Activated CD4-positive, alpha-beta T cell treated with anti-CD3 and anti-CD28 coated beads for 36 hours (primary cell): ENCODE measurements at regions of chr2 and their contacts with region 1.

Region 1: DNA sequence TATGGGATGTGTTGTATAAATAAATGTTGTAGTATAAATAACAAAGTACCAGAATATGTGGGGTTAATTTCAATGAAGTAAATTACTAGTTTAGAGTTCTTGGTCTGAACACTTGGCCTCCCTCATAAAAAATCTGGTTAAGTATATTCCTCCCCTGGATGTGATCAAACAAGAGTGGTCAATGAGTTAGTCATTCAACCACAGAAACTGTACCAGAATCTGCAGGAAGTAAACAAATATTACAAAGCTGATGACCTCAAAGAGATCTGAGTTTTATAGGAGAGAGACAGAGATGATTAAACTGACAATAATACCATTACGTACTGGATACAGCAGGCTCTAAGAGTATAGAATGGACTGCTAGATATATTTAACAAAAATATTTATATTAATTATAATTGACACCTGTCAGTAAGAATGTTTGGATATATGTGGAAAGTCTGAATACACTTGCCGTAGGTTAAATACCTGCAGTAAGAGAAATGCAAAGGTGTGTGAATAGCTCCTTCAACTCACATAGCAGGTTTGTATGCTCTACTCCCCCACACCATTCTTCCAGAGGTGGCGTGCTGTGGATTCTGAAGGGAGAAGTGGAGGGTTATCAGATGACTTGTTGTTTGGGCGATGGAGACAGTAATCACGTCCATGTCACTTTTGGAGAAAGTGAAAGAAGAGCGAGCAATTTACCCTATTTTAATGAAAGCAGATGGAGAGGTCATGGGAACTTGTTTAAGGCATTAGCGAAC is 108.3 kb upstream of the LRATD1 start:
- DNase-seq: no peak
- ATAC-seq: no peak
- H3K4me3 Mint-ChIP-seq: no peak overlapping the region
- H3K27ac Mint-ChIP-seq: no peak overlapping the region
- H3K4me1 Mint-ChIP-seq: no peaks in the 10 kb centered on the region
- H3K27me3 Mint-ChIP-seq: no peaks in the 10 kb centered on the region

Region 2: DNA sequence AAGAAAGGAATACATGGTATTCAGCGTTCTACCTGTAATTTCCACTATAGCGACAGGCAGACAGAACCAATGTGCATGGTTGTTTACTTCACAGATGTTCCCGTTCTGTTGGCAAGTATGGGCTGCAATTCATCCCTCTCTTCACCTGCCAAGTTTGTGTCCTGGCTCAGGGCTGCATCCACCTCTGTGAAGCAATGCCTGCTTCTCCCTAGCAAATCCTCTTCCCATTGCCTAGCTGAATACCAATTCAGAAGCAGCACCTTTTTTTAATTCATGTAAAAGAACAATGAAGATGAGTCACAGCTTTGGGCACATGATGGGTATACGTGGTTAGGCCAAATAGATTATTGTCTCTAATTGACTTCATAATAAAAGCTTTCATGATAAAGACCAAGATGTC is 53.6 kb after region 1 on chr2:
- CTCF ChIA-PET with region 1: no interaction called
- POLR2A ChIA-PET with region 1: interaction called, 12 read pairs
- intact Hi-C with region 1: no loop called
- DNase-seq: no peak
- ATAC-seq: no peak
- H3K4me3 Mint-ChIP-seq: no peak overlapping the region
- H3K27ac Mint-ChIP-seq: no peak overlapping the region
- H3K4me1 Mint-ChIP-seq: no peaks in the 10 kb centered on the region
- H3K27me3 Mint-ChIP-seq: peaks cover 4% of the 10 kb centered on the region